ENCODE measurements at regions of chr1 and their contacts with region 1.

Region 1: DNA sequence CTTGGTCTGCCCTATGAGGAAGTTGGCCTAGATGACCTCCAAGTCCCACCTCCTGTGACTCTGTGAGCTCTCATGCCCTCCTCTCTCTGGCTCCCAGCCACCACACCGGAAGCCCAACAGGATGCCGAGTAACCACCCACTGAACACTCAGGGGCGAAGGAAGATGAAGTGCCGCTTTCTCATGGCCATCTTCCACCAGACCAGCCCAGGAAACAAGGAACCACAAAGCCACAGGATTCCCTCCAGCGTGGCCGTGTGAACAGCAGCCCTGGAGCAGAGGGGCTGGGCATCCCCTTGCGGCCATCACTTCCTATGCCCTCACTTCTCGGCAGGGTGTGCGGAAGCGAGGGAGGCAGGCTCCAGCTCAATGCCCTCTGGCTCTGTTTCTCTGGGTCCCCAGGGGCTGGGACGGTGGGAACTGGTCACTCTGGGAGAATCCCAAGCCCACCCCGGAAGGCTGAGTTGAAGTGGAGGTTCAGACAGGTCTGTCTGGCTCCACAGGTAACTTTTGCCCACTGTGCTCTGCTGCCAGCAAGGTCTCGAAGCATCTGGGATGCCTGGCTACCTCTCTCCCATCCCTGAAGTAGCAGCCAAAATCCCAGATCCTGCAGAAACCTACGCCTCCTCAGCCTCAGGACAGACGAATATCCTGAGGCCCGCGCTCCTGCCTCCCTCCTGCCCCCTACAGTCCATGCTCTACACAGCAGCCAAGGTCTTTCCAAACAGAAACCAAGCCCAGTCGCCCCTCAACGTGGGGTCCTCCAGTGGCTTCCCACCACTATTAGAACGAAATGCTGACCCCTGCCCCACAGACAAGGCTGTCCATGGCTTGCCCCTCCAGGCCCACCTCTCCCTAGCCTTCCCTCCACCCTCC is 44.2 kb upstream of the ECE1 start:
- DNase-seq: no peak
- ATAC-seq: peak; percentile 85
- H3K4me3 ChIP-seq: no peak overlapping the region
- H3K27ac ChIP-seq: peak overlapping the region; percentile 66
- H3K4me1 ChIP-seq: peaks cover 58 to 72% of the 10 kb centered on the region in 2 experiments
- H3K27me3 ChIP-seq: no peaks in the 10 kb centered on the region
- CTCF ChIP-seq: peak; percentile 71 to 90 (median 77)
- POLR2A ChIP-seq: no peak
- RAD21 ChIP-seq: peak; percentile 82

Region 2: DNA sequence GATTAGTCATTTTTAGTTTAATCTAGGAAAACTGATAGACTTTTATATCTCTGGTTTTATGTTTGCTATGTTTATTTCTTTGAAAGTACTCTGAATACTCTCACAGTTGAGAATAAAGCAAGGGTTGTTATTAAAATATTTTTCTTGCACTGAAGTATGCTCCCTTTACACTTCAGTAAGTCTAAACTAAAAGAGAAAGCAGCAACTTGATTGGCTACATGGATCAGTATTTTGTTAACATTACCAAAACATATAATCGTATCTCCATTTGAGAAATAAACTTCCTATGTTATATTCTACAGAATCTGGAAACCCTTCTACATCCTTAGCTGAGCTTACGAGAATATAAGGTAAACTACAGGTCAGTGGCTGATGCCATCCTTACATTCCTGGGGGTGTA is 397.8 kb before region 1 on chr1:
- CTCF ChIA-PET with region 1: no interaction called
- POLR2A ChIA-PET with region 1: no interaction called
- RAD21 ChIA-PET with region 1: no interaction called
- intact Hi-C with region 1: no loop called
- DNase-seq: no peak
- ATAC-seq: no peak
- H3K4me3 ChIP-seq: no peak overlapping the region
- H3K27ac ChIP-seq: no peak overlapping the region
- H3K4me1 ChIP-seq: no peaks in the 10 kb centered on the region
- H3K27me3 ChIP-seq: no peaks in the 10 kb centered on the region
- CTCF ChIP-seq: no peak
- POLR2A ChIP-seq: no peak
- RAD21 ChIP-seq: no peak

Region 3: DNA sequence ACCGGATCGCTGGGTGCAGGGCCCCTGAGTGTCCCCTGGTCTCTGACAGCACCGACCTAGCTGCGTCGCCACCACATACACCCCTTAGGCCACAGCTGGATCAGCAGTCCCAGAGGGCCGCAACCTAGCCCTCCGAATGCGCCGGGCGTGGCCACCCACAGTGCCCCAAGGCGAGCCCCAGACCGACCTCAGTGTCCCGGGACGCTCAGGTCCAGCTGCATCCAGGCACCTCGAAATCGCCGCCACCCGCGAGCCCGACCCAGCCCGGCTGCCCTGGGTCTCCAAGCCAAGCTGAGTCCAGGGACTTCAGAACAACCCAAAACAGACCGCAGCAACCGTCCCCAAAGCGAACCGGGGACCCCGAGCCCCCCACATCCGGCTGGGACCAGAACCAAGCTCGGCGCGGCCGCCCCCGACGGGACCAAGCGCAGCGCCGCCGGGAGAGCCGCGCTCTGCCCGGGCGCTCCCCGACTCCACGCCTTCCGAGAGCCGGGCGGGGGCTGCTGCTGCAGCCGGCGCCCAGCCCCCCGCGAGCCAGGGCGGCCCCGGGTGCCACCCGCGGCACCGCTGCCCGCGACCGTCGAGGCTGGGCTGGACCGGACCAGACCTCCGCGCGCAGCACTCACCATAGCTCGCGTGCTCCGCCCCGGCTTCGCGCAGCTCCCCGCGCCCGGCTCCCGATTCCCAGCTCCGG is 10.4 kb after region 1 on chr1:
- CTCF ChIA-PET with region 1: interaction called, 15 read pairs
- POLR2A ChIA-PET with region 1: interaction called, 5 read pairs
- RAD21 ChIA-PET with region 1: no interaction called
- intact Hi-C with region 1: no loop called
- DNase-seq: no peak
- ATAC-seq: peak; percentile 48
- H3K4me3 ChIP-seq: peak overlapping the region; percentile 81 to 91
- H3K27ac ChIP-seq: peak overlapping the region; percentile 78; the same call in 1 of the 2 replicates
- H3K4me1 ChIP-seq: peaks cover 27 to 36% of the 10 kb centered on the region in 2 experiments
- H3K27me3 ChIP-seq: no peaks in the 10 kb centered on the region
- CTCF ChIP-seq: no peak
- POLR2A ChIP-seq: no peak
- RAD21 ChIP-seq: no peak